Activated CD4-positive, alpha-beta T cell treated with anti-CD3 and anti-CD28 coated beads, Interleukin-2, amount 10 ng/mL, durations not matched to agents 24 days and 14 days (primary cell): ENCODE measurements at regions of chr2 and their contacts with region 1.

Region 1: GRCh38 chr2:101736861-101737291 is 39.4 kb downstream of the MAP4K4 start:
- DNase-seq: no peak
- H3K4me3 Mint-ChIP-seq: no peak overlapping the region
- H3K27ac Mint-ChIP-seq: peak overlapping the region; percentile 65
- H3K4me1 Mint-ChIP-seq: peaks cover 63% of the 10 kb centered on the region
- H3K27me3 Mint-ChIP-seq: no peaks in the 10 kb centered on the region

Region 2: DNA sequence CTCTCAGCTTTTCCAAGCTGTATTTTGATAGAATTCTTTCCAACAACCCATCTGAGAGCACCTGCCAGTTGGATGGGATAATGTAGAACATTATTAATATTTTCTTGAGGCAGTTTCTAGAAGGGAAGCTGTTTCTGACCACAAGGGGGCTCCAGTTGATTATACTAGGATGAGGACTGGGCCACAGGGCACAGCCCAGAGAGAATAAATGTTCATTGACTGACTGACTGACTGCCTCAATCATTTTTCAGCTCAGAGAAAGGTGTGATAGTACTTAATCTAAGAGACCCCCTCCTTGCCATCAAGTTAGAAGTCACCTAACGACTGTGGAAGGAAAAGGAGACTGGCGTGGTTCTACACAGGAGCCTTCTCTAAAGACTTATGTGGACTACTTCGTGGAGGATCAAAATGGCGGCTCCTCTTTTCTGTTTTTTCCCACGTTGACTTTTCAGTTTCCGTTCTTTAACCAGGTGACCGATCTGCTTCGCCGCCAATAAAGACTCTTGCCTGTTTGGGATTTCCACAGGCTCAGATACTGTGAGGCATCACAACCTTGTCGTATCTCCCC is 317.7 kb before region 1 on chr2:
- intact Hi-C with region 1: loop called (anchors 2 kb)
- DNase-seq: peak; percentile 89
- H3K4me3 Mint-ChIP-seq: no peak overlapping the region
- H3K27ac Mint-ChIP-seq: no peak overlapping the region
- H3K4me1 Mint-ChIP-seq: no peaks in the 10 kb centered on the region
- H3K27me3 Mint-ChIP-seq: no peaks in the 10 kb centered on the region

Region 3: DNA sequence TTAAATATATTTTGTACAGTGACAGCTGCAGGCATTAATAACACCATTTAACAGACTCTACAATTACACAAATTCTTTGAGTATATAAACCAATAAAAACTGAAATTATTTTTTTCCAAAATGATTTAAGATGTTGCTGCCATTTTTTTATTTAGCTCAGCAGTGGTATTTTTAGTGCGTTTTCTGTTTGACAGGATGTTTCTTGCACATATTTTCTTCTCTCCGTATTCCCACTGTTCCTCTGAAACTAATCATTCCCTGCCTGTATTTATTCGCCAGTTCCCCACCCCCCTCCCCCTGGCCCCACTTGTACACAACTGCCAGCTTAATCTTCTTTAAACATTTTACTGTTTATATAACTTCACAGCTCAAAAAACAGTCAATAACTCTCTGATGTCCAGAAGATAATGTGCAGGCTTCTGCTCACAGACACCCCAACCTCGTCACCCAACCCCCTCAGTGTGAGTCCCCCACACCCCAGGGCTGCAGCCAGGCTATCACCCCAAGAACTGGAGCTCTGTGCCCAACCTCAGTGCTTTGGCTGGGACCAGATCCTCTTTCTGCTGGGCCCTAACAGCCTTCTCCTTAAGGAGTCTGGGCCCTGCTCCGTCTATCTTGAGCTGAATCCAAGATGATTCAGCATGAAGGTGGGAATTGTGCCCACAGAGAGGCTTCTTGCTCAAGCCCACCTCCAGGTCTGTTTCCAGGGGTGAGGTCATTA is 81.0 kb before region 1 on chr2:
- intact Hi-C with region 1: loop called (anchors 5 kb)
- DNase-seq: no peak
- H3K4me3 Mint-ChIP-seq: no peak overlapping the region
- H3K27ac Mint-ChIP-seq: no peak overlapping the region
- H3K4me1 Mint-ChIP-seq: peaks cover 21% of the 10 kb centered on the region
- H3K27me3 Mint-ChIP-seq: no peaks in the 10 kb centered on the region

Region 4: GRCh38 chr2:101697124-101698013 is 39.5 kb before region 1 on chr2 and contains the start of gene MAP4K4:
- intact Hi-C with region 1: loop called (anchors 5 kb)
- DNase-seq: peak; percentile 91
- H3K4me3 Mint-ChIP-seq: peak within 1 kb of the TSS; percentile 85
- H3K27ac Mint-ChIP-seq: peak within 1 kb of the TSS; percentile 88
- H3K4me1 Mint-ChIP-seq: peaks cover 22% of the 10 kb centered on the region
- H3K27me3 Mint-ChIP-seq: no peaks in the 10 kb centered on the region
- total RNA-seq, gene MAP4K4: 41.2 and 42.6 TPM in 2 replicates

Region 5: GRCh38 chr2:101704046-101704466 is 32.8 kb before region 1 on chr2:
- intact Hi-C with region 1: loop called (anchors 1 kb)
- DNase-seq: peak; percentile 80
- H3K4me3 Mint-ChIP-seq: peak overlapping the region; percentile 59
- H3K27ac Mint-ChIP-seq: peak overlapping the region; percentile 90
- H3K4me1 Mint-ChIP-seq: peaks cover 59% of the 10 kb centered on the region
- H3K27me3 Mint-ChIP-seq: no peaks in the 10 kb centered on the region

Region 6: GRCh38 chr2:101717071-101717845 is 19.6 kb before region 1 on chr2:
- intact Hi-C with region 1: loop called (anchors 1 kb)
- DNase-seq: peak; percentile 81
- H3K4me3 Mint-ChIP-seq: peak overlapping the region; percentile 31
- H3K27ac Mint-ChIP-seq: peak overlapping the region; percentile 90
- H3K4me1 Mint-ChIP-seq: peaks cover 58% of the 10 kb centered on the region
- H3K27me3 Mint-ChIP-seq: no peaks in the 10 kb centered on the region